ENCODE measurements at regions of chr6 and their contacts with region 1.

Region 1: DNA sequence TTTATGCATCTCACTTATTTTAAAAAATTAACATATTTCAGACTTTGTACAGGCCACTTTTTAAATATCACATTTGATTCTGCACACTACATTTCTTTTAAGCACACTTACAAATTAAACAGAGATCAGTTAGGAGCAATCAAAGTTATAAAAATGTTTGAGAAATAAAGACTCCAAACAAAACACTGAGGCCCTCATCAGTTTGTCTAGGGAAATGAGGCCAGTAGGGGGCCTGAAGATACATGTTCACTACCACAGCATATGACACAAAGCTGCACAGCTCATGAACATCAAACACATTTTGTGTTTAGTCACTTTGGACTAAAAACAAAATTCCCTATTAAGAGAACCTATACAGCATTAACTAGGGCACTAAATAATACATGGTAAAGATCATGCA is 180.5 kb downstream of the PDE7B start:
- DNase-seq: peak; percentile 74
- ATAC-seq: peak; percentile 81
- H3K4me3 ChIP-seq: no peak overlapping the region
- H3K27ac ChIP-seq: no peak overlapping the region
- H3K4me1 ChIP-seq: peaks cover 15% of the 10 kb centered on the region
- H3K27me3 ChIP-seq: no peaks in the 10 kb centered on the region
- CTCF ChIP-seq: peak; percentile 69
- POLR2A ChIP-seq: no peak
- RAD21 ChIP-seq: peak; percentile 63

Region 2: DNA sequence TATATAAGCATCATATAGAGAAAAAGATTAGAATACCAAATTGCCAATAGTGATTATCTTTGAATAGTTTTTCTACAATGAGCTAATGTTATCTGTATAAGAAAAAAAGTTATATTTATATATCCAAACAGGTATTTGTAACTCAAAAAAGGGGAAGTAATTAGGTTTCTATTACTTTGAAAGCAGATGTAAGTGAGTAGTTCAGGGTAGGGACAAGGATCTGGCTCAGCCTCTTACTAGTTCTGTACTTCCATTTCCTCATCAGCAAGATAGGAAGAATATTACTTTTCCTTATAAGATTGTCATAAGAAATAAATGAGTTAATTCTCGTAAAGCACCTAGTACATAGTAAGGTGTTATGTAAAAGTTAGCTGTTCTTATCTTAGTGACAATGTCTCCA is 566.7 kb before region 1 on chr6:
- CTCF ChIA-PET with region 1: no interaction called
- POLR2A ChIA-PET with region 1: no interaction called
- dilution Hi-C with region 1: no loop called
- in situ Hi-C with region 1: no loop called
- intact Hi-C with region 1: no loop called
- DNase-seq: no peak
- ATAC-seq: no peak
- H3K4me3 ChIP-seq: no peak overlapping the region
- H3K27ac ChIP-seq: no peak overlapping the region
- H3K4me1 ChIP-seq: no peaks in the 10 kb centered on the region
- H3K27me3 ChIP-seq: no peaks in the 10 kb centered on the region
- CTCF ChIP-seq: no peak
- POLR2A ChIP-seq: no peak
- RAD21 ChIP-seq: no peak

Region 3: GRCh38 chr6:136158387-136158821 is 126.4 kb after region 1 on chr6:
- CTCF ChIA-PET with region 1: no interaction called
- POLR2A ChIA-PET with region 1: no interaction called
- dilution Hi-C with region 1: no loop called
- in situ Hi-C with region 1: no loop called
- intact Hi-C with region 1: loop called (anchors 10 kb)
- DNase-seq: no peak
- ATAC-seq: peak; percentile 66
- H3K4me3 ChIP-seq: no peak overlapping the region
- H3K27ac ChIP-seq: no peak overlapping the region
- H3K4me1 ChIP-seq: peaks cover 6% of the 10 kb centered on the region
- H3K27me3 ChIP-seq: no peaks in the 10 kb centered on the region
- CTCF ChIP-seq: no peak
- POLR2A ChIP-seq: no peak
- RAD21 ChIP-seq: no peak

Measured in IMR-90 (cell line).